ENCODE measurements at regions of chr12 and their contacts with region 1.

Region 1: GRCh38 chr12:108633534-108634248 is at the start of gene SELPLG:
- DNase-seq: peak; percentile 95
- H3K4me3 Mint-ChIP-seq: peak within 1 kb of the TSS; percentile 98
- H3K27ac Mint-ChIP-seq: peak within 1 kb of the TSS; percentile 99
- H3K4me1 Mint-ChIP-seq: peaks cover 73% of the 10 kb centered on the region
- H3K27me3 Mint-ChIP-seq: no peaks in the 10 kb centered on the region
- total RNA-seq, gene SELPLG: 47.4 and 49.4 TPM in 2 replicates

Region 2: GRCh38 chr12:107760809-107761501 is 872.7 kb before region 1 on chr12 and contains the start of gene PRDM4:
- intact Hi-C with region 1: loop called (anchors 5 kb)
- DNase-seq: peak; percentile 98
- H3K4me3 Mint-ChIP-seq: peak within 1 kb of the TSS; percentile 93
- H3K27ac Mint-ChIP-seq: peak within 1 kb of the TSS; percentile 88
- H3K4me1 Mint-ChIP-seq: peaks cover 26% of the 10 kb centered on the region
- H3K27me3 Mint-ChIP-seq: peaks cover 7% of the 10 kb centered on the region
- total RNA-seq, gene PRDM4: 30.2 and 31.1 TPM in 2 replicates

Region 3: DNA sequence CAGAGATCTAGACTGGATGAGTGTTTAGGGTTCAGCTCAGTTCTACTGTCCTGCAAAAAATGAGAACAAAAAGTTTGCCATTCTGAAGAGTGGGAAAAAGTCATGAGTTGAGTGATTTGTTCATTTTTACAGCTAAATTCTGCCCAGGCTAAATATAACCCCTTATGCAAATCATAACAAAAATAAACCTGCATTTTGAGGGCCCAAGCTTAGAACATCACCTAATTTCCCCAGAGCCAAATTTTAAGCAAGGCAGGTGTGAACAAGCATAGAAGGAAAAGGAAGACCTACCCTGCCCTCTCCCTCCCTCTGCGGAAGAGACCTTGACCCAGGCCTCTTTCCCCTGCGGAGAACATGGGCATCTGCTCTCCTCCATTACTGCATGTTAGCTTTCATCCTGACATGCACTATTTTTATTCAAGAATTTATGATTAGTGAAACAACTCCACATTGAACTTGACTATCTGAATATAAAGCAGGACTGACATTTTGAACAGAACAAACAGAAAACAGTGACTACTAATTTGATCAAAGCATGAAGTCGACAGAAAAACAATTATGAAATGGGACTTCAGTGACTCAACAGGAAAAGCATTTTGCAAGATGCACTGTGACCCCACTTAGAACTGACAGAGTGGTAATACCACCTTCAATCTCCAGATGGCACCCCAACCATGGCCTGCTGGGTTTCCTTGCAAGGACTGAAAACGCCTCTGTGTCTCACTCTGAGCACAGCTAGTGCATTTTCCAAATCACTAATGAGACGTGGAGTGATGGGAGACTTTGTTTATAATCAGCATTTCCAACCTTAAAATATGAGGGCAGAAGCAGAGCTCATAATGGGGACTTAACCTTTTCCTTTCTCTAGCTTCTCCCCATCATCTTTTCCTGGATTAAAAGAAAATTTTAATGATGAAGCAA is 30.9 kb after region 1 on chr12:
- intact Hi-C with region 1: loop called (anchors 2 kb)
- DNase-seq: peak; percentile 95
- H3K4me3 Mint-ChIP-seq: peak overlapping the region; percentile 58
- H3K27ac Mint-ChIP-seq: peak overlapping the region; percentile 77
- H3K4me1 Mint-ChIP-seq: peaks cover 15% of the 10 kb centered on the region
- H3K27me3 Mint-ChIP-seq: no peaks in the 10 kb centered on the region

Region 4: GRCh38 chr12:108731105-108731865 is 97.6 kb after region 1 on chr12 and contains the start of gene CORO1C:
- intact Hi-C with region 1: loop called (anchors 2 kb)
- DNase-seq: peak; percentile 99
- H3K4me3 Mint-ChIP-seq: peak within 1 kb of the TSS; percentile 94
- H3K27ac Mint-ChIP-seq: peak within 1 kb of the TSS; percentile 95
- H3K4me1 Mint-ChIP-seq: peaks cover 41% of the 10 kb centered on the region
- H3K27me3 Mint-ChIP-seq: peaks cover 6% of the 10 kb centered on the region
- total RNA-seq, gene CORO1C: 64.6 and 70.1 TPM in 2 replicates

Region 5: GRCh38 chr12:109052414-109053323 is 419.0 kb after region 1 on chr12 and contains the start of gene USP30:
- intact Hi-C with region 1: loop called (anchors 5 kb)
- DNase-seq: peak; percentile 95
- H3K4me3 Mint-ChIP-seq: peak within 1 kb of the TSS; percentile 86
- H3K27ac Mint-ChIP-seq: peak within 1 kb of the TSS; percentile 95
- H3K4me1 Mint-ChIP-seq: peaks cover 8% of the 10 kb centered on the region
- H3K27me3 Mint-ChIP-seq: no peaks in the 10 kb centered on the region
- total RNA-seq, gene USP30: 6.6 and 6.9 TPM in 2 replicates